ENCODE measurements at regions of chr5 and their contacts with region 1.

Region 1: DNA sequence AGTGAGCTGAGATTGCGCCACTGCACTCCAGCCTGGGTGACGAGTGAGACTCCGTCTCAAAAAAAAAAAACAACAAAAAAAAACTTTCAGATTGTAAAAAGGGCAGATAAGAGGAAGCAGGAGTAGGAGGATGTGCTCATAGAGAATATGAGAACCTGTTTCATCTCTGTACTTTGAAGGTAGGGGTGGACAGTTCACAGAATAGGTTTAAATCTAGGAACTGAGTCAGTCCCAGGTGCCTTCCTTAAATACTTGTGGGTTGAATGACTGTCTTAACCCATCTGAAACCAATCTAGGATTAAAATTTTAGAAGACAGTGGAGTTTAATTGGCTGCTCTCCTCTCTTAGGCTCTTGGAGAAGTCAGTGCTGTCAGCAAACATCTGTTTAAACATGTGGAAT is 12.4 kb downstream of the POLK start:
- DNase-seq: no peak
- ATAC-seq: peak; percentile 80
- H3K4me3 Mint-ChIP-seq: peak overlapping the region; percentile 58
- H3K27ac Mint-ChIP-seq: peak overlapping the region; percentile 76
- H3K4me1 Mint-ChIP-seq: peaks cover 43% of the 10 kb centered on the region
- H3K27me3 Mint-ChIP-seq: no peaks in the 10 kb centered on the region
- CTCF ChIP-seq: no peak

Region 2: DNA sequence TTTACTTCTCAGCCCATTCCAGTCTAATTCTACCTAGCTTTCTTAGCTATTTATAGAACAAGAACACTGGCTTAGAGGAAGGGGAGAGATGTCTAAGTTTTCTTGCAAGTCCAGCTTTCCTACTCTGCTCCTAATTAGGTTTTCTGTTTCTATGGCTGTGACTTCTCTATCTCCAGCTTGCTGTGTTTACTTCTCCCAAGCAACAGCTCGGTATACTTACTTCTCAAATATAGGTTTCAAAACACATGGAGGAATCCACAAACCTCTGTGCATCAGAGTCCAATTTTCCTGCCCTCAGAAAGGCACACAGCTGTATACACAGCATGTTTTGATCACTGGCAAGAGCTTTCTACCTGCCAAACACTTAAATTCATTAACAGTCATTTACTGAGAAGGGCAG is 204.4 kb before region 1 on chr5:
- CTCF ChIA-PET with region 1: no interaction called
- POLR2A ChIA-PET with region 1: interaction called, 10 read pairs
- intact Hi-C with region 1: no loop called
- DNase-seq: no peak
- ATAC-seq: no peak
- H3K4me3 Mint-ChIP-seq: no peak overlapping the region
- H3K27ac Mint-ChIP-seq: no peak overlapping the region
- H3K4me1 Mint-ChIP-seq: no peaks in the 10 kb centered on the region
- H3K27me3 Mint-ChIP-seq: peaks cover 12% of the 10 kb centered on the region
- CTCF ChIP-seq: no peak

Region 3: DNA sequence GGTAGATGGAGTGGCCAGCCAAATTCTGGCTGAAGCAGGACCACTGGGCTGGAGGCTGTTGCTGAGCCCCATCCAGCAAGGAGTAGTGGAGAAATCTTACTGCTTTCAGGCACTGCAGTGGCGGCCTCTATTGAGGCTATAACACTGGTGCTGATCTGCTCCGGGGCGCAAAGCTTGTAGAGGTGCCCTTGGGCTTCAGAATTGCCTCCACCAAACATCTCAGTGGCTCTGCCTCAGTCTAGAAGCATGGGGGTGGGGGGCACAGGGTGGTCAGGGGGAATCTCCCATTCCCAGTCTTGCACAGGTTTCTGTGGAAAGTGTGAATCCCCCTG is 12.9 kb after region 1 on chr5:
- CTCF ChIA-PET with region 1: no interaction called
- POLR2A ChIA-PET with region 1: no interaction called
- intact Hi-C with region 1: loop called (anchors 1 kb)
- DNase-seq: no peak
- ATAC-seq: no peak
- H3K4me3 Mint-ChIP-seq: no peak overlapping the region
- H3K27ac Mint-ChIP-seq: no peak overlapping the region
- H3K4me1 Mint-ChIP-seq: peaks cover 21% of the 10 kb centered on the region
- H3K27me3 Mint-ChIP-seq: no peaks in the 10 kb centered on the region
- CTCF ChIP-seq: no peak

Region 4: GRCh38 chr5:75566710-75567309 is 42.7 kb after region 1 on chr5:
- CTCF ChIA-PET with region 1: no interaction called
- POLR2A ChIA-PET with region 1: interaction called, 3 read pairs
- intact Hi-C with region 1: loop called (anchors 2 kb)
- DNase-seq: no peak
- ATAC-seq: peak; percentile 83
- H3K4me3 Mint-ChIP-seq: peak overlapping the region; percentile 76
- H3K27ac Mint-ChIP-seq: peak overlapping the region; percentile 88
- H3K4me1 Mint-ChIP-seq: peaks cover 46% of the 10 kb centered on the region
- H3K27me3 Mint-ChIP-seq: no peaks in the 10 kb centered on the region
- CTCF ChIP-seq: no peak